ENCODE measurements at regions of chr12 and their contacts with region 1.

Region 1: DNA sequence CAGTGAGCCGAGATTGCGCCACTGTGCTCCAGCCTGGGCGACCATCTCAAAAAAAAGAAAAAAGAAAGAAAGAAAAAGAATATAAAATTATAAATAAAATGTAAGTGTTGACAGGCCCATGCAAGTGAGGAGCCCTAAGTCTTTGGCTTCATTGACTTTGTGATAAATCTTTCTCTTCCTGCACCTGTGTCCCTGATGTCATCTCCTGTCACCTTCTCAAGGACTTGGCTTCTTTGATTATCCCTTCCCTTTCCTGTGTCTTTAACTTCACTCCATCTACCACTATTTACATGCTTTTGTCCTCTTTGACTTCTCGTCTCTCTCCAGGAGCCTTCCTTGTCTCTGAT is 33.6 kb upstream of the WNK1 start:
- DNase-seq: peak in 1 of 9 donors; percentile 24
- ATAC-seq: peak; percentile 10
- H3K4me3 ChIP-seq: peak overlapping the region; percentile 43
- H3K4me3 Mint-ChIP-seq: peak overlapping the region; percentile 45 to 87 (median 71)
- H3K27ac ChIP-seq: peak overlapping the region; percentile 51
- H3K27ac Mint-ChIP-seq: peak overlapping the region; percentile 78 to 93 (median 86)
- H3K4me1 ChIP-seq: peaks cover under 1 to 33% of the 10 kb centered on the region in 2 donors
- H3K4me1 Mint-ChIP-seq: peaks cover 32 to 67% (median 50%) of the 10 kb centered on the region in 7 donors
- H3K27me3 ChIP-seq: no peaks in the 10 kb centered on the region
- H3K27me3 Mint-ChIP-seq: no peaks in the 10 kb centered on the region

Region 2: DNA sequence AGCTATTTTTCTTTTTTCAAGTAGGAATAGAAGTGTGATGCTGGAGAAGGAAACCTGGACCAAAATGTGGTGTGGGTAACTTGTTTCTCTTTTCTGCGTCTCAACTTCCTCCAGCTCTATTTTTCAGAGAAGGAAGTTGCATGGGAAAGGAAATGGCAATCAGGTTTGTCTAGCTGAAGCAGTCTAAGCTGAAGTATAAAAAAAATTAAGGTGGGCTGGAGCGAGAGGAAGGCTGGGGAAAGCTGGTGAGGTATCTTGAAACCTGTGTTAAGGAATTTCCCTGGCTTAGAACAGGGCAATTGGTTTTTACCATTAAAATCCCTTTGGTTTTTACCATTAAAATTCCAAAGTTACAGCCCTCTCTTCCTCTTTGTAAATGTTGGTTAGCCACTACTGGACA is 21.2 kb before region 1 on chr12:
- CTCF ChIA-PET with region 1: no interaction called
- POLR2A ChIA-PET with region 1: interaction called, 4 read pairs
- intact Hi-C with region 1: loop called in 1 of 2 experiments (anchors 2 kb)
- DNase-seq: peak in 5 of 9 donors; percentile 18 to 37 (median 28)
- ATAC-seq: peak; percentile 31
- H3K4me3 ChIP-seq: peak overlapping the region; percentile 11
- H3K4me3 Mint-ChIP-seq: peak overlapping the region in 9 of 10 donors; percentile 55 to 88 (median 72)
- H3K27ac ChIP-seq: peak overlapping the region; percentile 54
- H3K27ac Mint-ChIP-seq: peak overlapping the region in 8 of 9 donors; percentile 38 to 95 (median 91)
- H3K4me1 ChIP-seq: peaks cover 11 to 17% of the 10 kb centered on the region in 2 donors
- H3K4me1 Mint-ChIP-seq: peaks cover 14 to 56% (median 47%) of the 10 kb centered on the region in 7 donors
- H3K27me3 ChIP-seq: no peaks in the 10 kb centered on the region
- H3K27me3 Mint-ChIP-seq: no peaks in the 10 kb centered on the region

Region 3: GRCh38 chr12:1234073-1234472 is 515.3 kb after region 1 on chr12:
- CTCF ChIA-PET with region 1: no interaction called
- POLR2A ChIA-PET with region 1: no interaction called
- intact Hi-C with region 1: no loop called
- DNase-seq: no peak
- ATAC-seq: no peak
- H3K4me3 ChIP-seq: no peak overlapping the region
- H3K4me3 Mint-ChIP-seq: no peak overlapping the region
- H3K27ac ChIP-seq: no peak overlapping the region
- H3K27ac Mint-ChIP-seq: no peak overlapping the region
- H3K4me1 ChIP-seq: no peaks in the 10 kb centered on the region
- H3K4me1 Mint-ChIP-seq: peaks cover 0 to 11% (median 4%) of the 10 kb centered on the region in 7 donors
- H3K27me3 ChIP-seq: no peaks in the 10 kb centered on the region
- H3K27me3 Mint-ChIP-seq: no peaks in the 10 kb centered on the region

Measured in naive thymus-derived CD4-positive, alpha-beta T cell (primary cell).